ENCODE measurements at regions of chr12 and their contacts with region 1.

Region 1: DNA sequence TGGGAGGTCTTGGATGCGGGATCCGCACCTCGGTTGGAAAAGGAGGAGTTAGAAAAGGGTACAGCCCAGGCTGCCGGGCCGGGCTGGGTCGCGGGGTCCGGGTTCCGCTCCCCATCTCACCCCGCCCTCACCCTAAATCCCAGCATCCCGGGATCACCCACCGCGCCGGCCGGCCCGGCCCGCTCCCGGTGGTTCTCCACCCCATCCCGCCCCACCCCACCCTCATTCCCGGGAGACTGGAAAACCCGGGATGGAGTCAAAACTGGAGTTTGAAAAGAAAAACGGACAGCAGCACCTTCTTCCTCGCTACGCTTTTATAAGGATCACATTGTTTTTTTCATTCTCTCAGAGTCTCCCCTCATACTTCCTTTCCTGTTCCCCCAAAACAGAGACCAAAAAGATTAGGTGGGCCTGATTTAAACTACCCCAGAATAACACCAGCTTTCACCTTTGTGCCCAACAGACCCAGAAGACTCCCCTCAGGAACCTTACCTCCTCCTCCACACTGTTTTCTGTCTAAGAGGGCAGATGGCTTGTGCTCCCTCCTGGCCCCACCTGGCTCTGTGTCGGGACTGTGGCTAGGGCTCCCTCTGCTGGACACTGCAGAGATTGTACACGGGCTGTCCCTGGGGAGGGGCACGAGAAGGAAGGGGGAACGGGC is 2.8 kb downstream of the GLI1 start:
- DNase-seq: peak; percentile 92 to 93
- H3K4me3 ChIP-seq: peak overlapping the region; percentile 43
- H3K4me3 Mint-ChIP-seq: peak overlapping the region; percentile 81
- H3K27ac Mint-ChIP-seq: peak overlapping the region; percentile 49
- H3K4me1 ChIP-seq: peaks cover 10% of the 10 kb centered on the region
- H3K4me1 Mint-ChIP-seq: peaks cover 14% of the 10 kb centered on the region
- H3K27me3 ChIP-seq: no peaks in the 10 kb centered on the region
- H3K27me3 Mint-ChIP-seq: peaks cover 17% of the 10 kb centered on the region
- CTCF ChIP-seq: peak; percentile 83 to 95

Region 2: GRCh38 chr12:57190037-57190436 is 272.3 kb before region 1 on chr12:
- CTCF ChIA-PET with region 1: no interaction called
- POLR2A ChIA-PET with region 1: no interaction called
- intact Hi-C with region 1: no loop called
- DNase-seq: no peak
- H3K4me3 ChIP-seq: no peak overlapping the region
- H3K4me3 Mint-ChIP-seq: no peak overlapping the region
- H3K27ac Mint-ChIP-seq: no peak overlapping the region
- H3K4me1 ChIP-seq: no peaks in the 10 kb centered on the region
- H3K4me1 Mint-ChIP-seq: no peaks in the 10 kb centered on the region
- H3K27me3 ChIP-seq: no peaks in the 10 kb centered on the region
- H3K27me3 Mint-ChIP-seq: no peaks in the 10 kb centered on the region
- CTCF ChIP-seq: no peak

Region 3: DNA sequence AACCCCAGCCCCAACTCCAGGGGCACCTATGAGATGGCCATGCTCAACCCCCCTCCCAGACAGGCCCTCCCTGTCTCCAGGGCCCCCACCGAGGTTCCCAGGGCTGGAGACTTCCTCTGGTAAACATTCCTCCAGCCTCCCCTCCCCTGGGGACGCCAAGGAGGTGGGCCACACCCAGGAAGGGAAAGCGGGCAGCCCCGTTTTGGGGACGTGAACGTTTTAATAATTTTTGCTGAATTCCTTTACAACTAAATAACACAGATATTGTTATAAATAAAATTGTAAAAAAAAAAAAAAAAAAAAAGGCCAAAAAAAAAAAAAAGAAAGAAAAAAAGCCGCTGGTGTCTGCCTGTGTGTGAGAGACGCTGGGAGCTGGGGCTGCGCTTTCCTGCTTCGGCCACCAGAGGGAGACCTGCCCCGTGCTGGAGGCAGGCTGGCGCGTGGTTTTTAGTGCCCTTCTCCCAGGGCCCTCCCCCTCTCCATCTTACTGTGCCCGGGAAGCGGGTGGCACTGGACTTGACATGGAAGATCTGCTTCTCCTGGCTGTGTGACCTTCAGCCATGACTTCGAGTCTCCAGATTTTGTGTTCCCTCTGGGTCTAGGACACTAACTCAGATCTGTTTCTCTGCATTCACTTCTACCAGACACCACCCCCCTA is 249.2 kb before region 1 on chr12:
- CTCF ChIA-PET with region 1: interaction called, 5 read pairs
- POLR2A ChIA-PET with region 1: no interaction called
- intact Hi-C with region 1: loop called (anchors 1 kb)
- DNase-seq: peak; percentile 83 to 90
- H3K4me3 ChIP-seq: no peak overlapping the region
- H3K4me3 Mint-ChIP-seq: no peak overlapping the region
- H3K27ac Mint-ChIP-seq: no peak overlapping the region
- H3K4me1 ChIP-seq: peaks cover 20% of the 10 kb centered on the region
- H3K4me1 Mint-ChIP-seq: peaks cover 28% of the 10 kb centered on the region
- H3K27me3 ChIP-seq: peaks cover 8% of the 10 kb centered on the region
- H3K27me3 Mint-ChIP-seq: peaks cover 14% of the 10 kb centered on the region
- CTCF ChIP-seq: peak; percentile 83 to 94

Region 4: GRCh38 chr12:57309420-57309819 is 153.0 kb before region 1 on chr12:
- CTCF ChIA-PET with region 1: interaction called, 14 read pairs
- POLR2A ChIA-PET with region 1: no interaction called
- intact Hi-C with region 1: no loop called
- DNase-seq: no peak
- H3K4me3 ChIP-seq: no peak overlapping the region
- H3K4me3 Mint-ChIP-seq: no peak overlapping the region
- H3K27ac Mint-ChIP-seq: no peak overlapping the region
- H3K4me1 ChIP-seq: no peaks in the 10 kb centered on the region
- H3K4me1 Mint-ChIP-seq: no peaks in the 10 kb centered on the region
- H3K27me3 ChIP-seq: no peaks in the 10 kb centered on the region
- H3K27me3 Mint-ChIP-seq: no peaks in the 10 kb centered on the region
- CTCF ChIP-seq: no peak

Region 5: GRCh38 chr12:57496822-57497221 is 34.4 kb after region 1 on chr12:
- CTCF ChIA-PET with region 1: interaction called, 11 read pairs
- POLR2A ChIA-PET with region 1: interaction called, 5 read pairs
- intact Hi-C with region 1: no loop called
- DNase-seq: no peak
- H3K4me3 ChIP-seq: no peak overlapping the region
- H3K4me3 Mint-ChIP-seq: no peak overlapping the region
- H3K27ac Mint-ChIP-seq: peak overlapping the region; percentile 65
- H3K4me1 ChIP-seq: no peaks in the 10 kb centered on the region
- H3K4me1 Mint-ChIP-seq: peaks cover 10% of the 10 kb centered on the region
- H3K27me3 ChIP-seq: no peaks in the 10 kb centered on the region
- H3K27me3 Mint-ChIP-seq: no peaks in the 10 kb centered on the region
- CTCF ChIP-seq: no peak

Region 6: GRCh38 chr12:57735952-57736740 is 273.8 kb after region 1 on chr12:
- CTCF ChIA-PET with region 1: interaction called, 3 read pairs
- POLR2A ChIA-PET with region 1: no interaction called
- intact Hi-C with region 1: loop called (anchors 5 kb)
- DNase-seq: peak in 1 of 2 experiments; percentile 69
- H3K4me3 ChIP-seq: peak overlapping the region; percentile 25
- H3K4me3 Mint-ChIP-seq: peak overlapping the region; percentile 68
- H3K27ac Mint-ChIP-seq: no peak overlapping the region
- H3K4me1 ChIP-seq: peaks cover 12% of the 10 kb centered on the region
- H3K4me1 Mint-ChIP-seq: peaks cover 17% of the 10 kb centered on the region
- H3K27me3 ChIP-seq: peaks cover 7% of the 10 kb centered on the region
- H3K27me3 Mint-ChIP-seq: peaks cover 36% of the 10 kb centered on the region
- CTCF ChIP-seq: peak; percentile 12 to 57